ENCODE measurements at regions of chr2 and their contacts with region 1.

Region 1: GRCh38 chr2:25606892-25607291 is 66.5 kb downstream of the DTNB start:
- DNase-seq: no peak
- ATAC-seq: 0 out of 3 replicates have a peak, but pooled peaks have one; percentile 29
- H3K4me3 ChIP-seq: no peak overlapping the region
- H3K27ac ChIP-seq: no peak overlapping the region
- H3K4me1 ChIP-seq: peaks cover 8% of the 10 kb centered on the region
- H3K27me3 ChIP-seq: no peaks in the 10 kb centered on the region
- CTCF ChIP-seq: peak; percentile 44 to 74 (median 51)
- EP300 ChIP-seq: no peak
- POLR2A ChIP-seq: no peak
- RAD21 ChIP-seq: peak; percentile 83

Region 2: DNA sequence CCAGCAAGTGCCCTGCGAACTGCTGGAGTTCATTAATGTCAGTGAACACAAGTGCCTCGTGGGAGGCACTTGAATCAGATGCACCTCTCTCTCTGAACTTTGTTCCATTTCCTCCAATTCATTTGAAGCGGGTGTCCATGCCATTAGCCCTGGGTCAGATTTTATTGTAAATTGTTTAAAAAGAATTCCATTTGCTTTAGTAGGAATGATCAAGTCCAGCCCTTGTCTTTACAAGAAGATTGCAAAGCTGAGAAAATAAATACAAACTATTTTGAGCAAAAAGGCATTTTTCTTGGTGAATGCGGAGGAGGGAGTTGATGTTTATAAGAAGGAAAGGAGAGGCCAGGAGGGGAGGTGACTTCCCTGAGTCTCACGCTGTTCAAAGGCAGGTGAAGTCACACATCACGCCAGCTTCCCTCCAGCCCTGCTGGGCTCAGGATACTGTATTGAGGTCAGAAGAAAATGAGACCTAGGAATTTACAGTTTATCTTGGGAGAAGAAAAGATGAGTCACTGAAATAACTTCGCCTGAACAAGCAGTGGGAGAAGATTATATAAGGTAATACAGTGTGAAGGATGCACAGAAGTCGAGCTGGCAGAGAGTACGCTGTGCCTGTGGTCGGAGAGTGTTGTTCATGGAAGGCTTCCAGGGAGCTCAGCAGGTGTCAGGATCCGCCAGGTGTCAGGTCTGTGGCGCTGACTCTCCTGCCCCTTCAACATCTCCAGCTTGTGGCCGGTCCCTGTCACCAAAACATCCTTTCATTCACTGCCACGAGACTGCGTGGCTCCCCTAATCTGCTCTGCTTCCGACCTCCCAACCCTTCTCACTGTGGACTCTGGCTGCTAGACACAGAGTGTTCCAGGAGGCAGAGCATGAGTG is 528.5 kb before region 1 on chr2:
- CTCF ChIA-PET with region 1: no interaction called
- POLR2A ChIA-PET with region 1: no interaction called
- RAD21 ChIA-PET with region 1: no interaction called
- SMC1A ChIA-PET with region 1: no interaction called
- in situ Hi-C with region 1: no loop called
- intact Hi-C with region 1: no loop called
- DNase-seq: no peak
- ATAC-seq: no peak
- H3K4me3 ChIP-seq: no peak overlapping the region
- H3K27ac ChIP-seq: no peak overlapping the region
- H3K4me1 ChIP-seq: peaks cover 8% of the 10 kb centered on the region
- H3K27me3 ChIP-seq: 0 out of 4 replicates have a peak, but pooled peaks cover 0 to 2% of the 10 kb centered on the region in 2 experiments
- CTCF ChIP-seq: no peak
- EP300 ChIP-seq: no peak
- POLR2A ChIP-seq: no peak
- RAD21 ChIP-seq: no peak

Region 3: DNA sequence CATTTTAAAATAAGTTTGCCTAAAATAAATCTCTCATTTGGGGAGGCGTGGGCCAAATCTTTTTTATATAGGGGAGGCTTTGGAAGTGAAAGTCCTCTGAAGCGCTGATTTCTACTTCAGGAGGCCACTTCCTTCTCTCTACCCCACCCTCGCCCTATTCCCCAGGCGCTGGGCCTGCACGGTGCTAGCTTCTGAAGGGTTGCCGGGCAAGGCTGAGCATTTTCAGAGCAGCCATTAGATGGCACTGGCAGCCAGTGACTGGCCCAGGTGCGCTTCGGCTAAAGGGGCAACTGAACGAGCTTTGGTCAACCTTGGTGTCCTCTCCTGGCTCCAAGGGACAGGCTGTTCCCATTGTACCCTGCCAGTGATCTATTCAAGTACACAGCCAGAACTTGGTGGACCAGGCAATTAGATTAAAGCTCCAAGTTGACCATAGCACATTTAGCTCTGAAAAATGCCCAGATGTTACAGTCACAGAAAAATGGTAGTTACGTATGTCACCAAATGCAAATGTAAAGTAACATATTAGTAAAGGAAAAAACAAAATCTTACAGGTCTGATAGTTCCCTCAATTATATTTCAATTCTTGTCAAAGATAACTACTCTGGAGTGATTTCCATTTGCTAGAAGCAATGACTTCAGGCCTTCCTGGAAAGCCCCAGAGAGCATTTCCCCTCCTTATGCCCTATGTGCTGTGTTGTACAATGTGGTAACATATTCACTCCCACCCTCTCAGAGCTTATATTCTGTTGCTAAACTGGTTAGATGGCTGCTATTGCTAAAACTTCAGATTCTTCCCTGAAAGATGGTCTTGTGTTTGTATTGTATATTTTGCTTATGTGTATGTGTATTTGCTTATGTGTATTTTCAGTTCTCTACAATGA is 440.7 kb before region 1 on chr2:
- CTCF ChIA-PET with region 1: interaction called, 29 read pairs
- POLR2A ChIA-PET with region 1: no interaction called
- RAD21 ChIA-PET with region 1: interaction called, 8 read pairs
- SMC1A ChIA-PET with region 1: interaction called, 3 read pairs
- in situ Hi-C with region 1: no loop called
- intact Hi-C with region 1: no loop called
- DNase-seq: peak; percentile 49
- ATAC-seq: peak; percentile 97
- H3K4me3 ChIP-seq: no peak overlapping the region
- H3K27ac ChIP-seq: no peak overlapping the region
- H3K4me1 ChIP-seq: peaks cover 18% of the 10 kb centered on the region
- H3K27me3 ChIP-seq: peaks cover 5 to 14% of the 10 kb centered on the region in 2 experiments; a peak in 3 of 4 replicates
- CTCF ChIP-seq: peak; percentile 74 to 97 (median 79)
- EP300 ChIP-seq: no peak
- POLR2A ChIP-seq: no peak
- RAD21 ChIP-seq: peak; percentile 82

Region 4: DNA sequence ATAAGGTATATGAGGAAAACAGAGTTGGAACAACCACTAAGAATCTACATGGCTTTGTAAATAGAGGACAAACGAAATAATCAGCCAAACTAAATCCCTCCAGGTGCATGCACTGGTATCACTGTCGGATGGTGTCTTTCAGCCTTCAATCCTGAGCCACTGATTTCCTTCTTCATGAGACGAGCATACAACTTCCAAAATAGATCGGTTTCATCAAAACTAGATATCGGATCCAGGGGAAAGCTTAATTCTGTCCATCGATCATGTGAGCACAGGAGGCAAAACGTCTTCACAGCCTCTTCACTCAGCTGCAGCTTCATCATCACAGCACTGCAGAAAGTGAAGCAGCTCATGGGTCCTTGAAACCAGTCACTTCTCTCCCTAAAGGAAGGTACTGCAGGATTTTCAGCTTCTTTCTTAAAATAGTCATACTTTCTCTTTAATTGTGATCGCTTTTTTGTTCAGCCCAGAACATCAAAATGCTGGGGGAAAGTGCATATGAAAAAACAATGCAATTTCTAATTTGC is 14.1 kb before region 1 on chr2:
- CTCF ChIA-PET with region 1: interaction called, 40 read pairs
- POLR2A ChIA-PET with region 1: interaction called, 4 read pairs
- RAD21 ChIA-PET with region 1: interaction called, 20 read pairs
- SMC1A ChIA-PET with region 1: interaction called, 19 read pairs
- in situ Hi-C with region 1: no loop called
- intact Hi-C with region 1: no loop called
- DNase-seq: no peak
- ATAC-seq: no peak; the same call in 2 of the 3 replicates
- H3K4me3 ChIP-seq: no peak overlapping the region
- H3K27ac ChIP-seq: no peak overlapping the region
- H3K4me1 ChIP-seq: peaks cover 19% of the 10 kb centered on the region
- H3K27me3 ChIP-seq: no peaks in the 10 kb centered on the region
- CTCF ChIP-seq: no peak
- EP300 ChIP-seq: no peak
- POLR2A ChIP-seq: no peak
- RAD21 ChIP-seq: no peak

Region 5: DNA sequence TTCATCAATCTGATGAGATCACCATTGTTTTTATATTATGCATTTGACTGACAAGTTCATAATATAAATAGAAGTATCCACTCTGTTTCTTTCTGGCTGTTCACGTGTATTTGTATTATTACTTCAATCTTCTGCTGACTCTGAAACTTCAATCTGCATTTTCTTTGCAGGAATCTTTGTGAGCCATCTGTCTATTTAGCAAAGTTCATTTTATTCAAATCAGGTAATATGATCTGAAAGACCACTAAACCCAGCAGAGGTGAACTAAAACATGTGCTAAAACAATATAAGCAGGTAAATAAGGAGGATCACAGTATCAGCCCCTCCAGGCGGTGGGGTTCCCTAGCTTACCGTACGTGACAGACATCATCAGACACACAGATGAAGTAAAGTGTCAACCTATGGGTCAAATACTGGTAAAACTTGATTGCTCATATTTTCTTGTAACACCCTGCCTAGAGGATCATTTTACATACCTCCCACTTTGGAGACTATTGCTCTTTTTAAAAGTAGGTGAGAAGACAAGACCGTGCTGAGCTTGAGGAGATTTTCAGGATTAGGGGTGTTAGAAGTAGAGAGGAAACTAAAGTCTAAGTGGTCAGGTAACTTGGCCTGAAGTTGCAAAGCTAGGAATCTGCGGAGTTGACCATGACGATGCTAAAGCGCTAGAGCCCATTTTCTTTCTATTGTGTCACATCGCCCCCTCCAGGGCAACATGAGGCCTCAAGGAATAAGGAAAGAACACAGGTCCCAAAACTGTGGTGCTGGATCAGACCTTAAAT is 57.5 kb after region 1 on chr2:
- CTCF ChIA-PET with region 1: interaction called, 136 read pairs
- POLR2A ChIA-PET with region 1: interaction called, 4 read pairs
- RAD21 ChIA-PET with region 1: interaction called, 59 read pairs
- SMC1A ChIA-PET with region 1: interaction called, 72 read pairs
- in situ Hi-C with region 1: no loop called
- intact Hi-C with region 1: loop called (anchors 2 kb)
- DNase-seq: no peak
- ATAC-seq: peak; percentile 74
- H3K4me3 ChIP-seq: no peak overlapping the region
- H3K27ac ChIP-seq: no peak overlapping the region
- H3K4me1 ChIP-seq: no peaks in the 10 kb centered on the region
- H3K27me3 ChIP-seq: no peaks in the 10 kb centered on the region
- CTCF ChIP-seq: peak; percentile 63 to 72 (median 67)
- EP300 ChIP-seq: no peak
- POLR2A ChIP-seq: no peak
- RAD21 ChIP-seq: peak; percentile 95

Region 6: DNA sequence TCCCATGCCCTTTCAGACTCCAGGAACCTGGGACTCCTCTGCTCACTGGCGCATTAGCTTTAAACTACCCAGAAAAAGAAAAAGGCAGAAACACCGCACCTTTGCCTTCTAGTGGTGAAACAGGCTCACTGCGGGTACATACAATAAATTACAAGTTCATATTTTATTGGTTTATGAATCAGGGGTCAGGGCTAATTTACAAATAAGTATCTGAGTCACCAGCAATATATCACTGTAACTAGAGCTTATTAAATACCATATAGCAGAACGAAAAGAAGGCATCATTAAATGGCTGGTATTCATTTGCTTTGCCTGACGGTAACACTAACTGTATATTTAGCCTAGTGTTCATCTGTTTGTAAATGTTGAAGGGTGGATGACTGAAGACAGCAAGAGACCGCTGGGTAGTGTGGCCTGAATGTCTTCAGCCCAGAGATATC is 93.3 kb after region 1 on chr2:
- CTCF ChIA-PET with region 1: interaction called, 162 read pairs
- POLR2A ChIA-PET with region 1: interaction called, 3 read pairs
- RAD21 ChIA-PET with region 1: interaction called, 50 read pairs
- SMC1A ChIA-PET with region 1: interaction called, 72 read pairs
- in situ Hi-C with region 1: no loop called
- intact Hi-C with region 1: loop called (anchors 1 kb)
- DNase-seq: no peak
- ATAC-seq: peak; percentile 86
- H3K4me3 ChIP-seq: no peak overlapping the region
- H3K27ac ChIP-seq: no peak overlapping the region
- H3K4me1 ChIP-seq: no peaks in the 10 kb centered on the region
- H3K27me3 ChIP-seq: peaks cover 4 to 5% of the 10 kb centered on the region in 2 experiments; a peak in 2 of 4 replicates
- CTCF ChIP-seq: peak; percentile 69 to 80 (median 70)
- EP300 ChIP-seq: no peak
- POLR2A ChIP-seq: no peak
- RAD21 ChIP-seq: peak; percentile 65

Region 7: DNA sequence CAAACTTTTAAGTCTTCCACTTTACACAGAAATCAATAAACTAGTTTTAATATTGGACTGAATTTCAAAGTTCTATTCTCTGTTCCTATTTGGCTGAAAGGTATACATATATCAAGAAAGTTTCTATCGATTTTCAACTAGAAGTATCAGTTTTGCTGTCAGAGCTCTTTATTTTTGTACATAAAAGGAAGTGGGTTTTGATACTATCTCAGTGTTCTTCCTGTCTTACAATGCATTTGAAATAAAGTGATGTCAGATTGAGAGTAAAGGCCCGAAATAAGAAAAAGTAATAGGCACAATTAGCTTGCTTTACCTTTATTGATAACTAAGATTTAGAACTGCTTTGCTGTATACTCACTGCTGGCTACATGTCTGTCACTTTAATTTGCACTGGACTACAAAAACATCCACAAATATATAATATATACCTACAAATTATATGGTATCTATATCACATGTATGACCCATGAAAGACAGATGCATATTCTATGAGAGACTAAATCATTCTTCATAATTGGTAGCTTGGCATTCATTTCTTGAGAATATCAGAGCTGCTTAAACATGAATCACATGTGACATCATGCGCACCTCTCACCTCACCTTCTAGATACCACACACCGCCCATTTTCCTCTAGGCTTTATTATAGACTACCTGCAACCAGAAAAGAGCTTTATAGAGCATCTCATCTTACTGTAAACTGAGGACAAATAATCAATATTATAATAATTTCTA is 187.8 kb after region 1 on chr2:
- CTCF ChIA-PET with region 1: interaction called, 4 read pairs
- POLR2A ChIA-PET with region 1: no interaction called
- RAD21 ChIA-PET with region 1: interaction called, 5 read pairs
- SMC1A ChIA-PET with region 1: no interaction called
- in situ Hi-C with region 1: no loop called
- intact Hi-C with region 1: loop called (anchors 10 kb)
- DNase-seq: peak; percentile 16
- ATAC-seq: peak; percentile 81
- H3K4me3 ChIP-seq: peak overlapping the region; percentile 25; the same call in 1 of the 2 replicates
- H3K27ac ChIP-seq: peak overlapping the region; percentile 13; the same call in 1 of the 2 replicates
- H3K4me1 ChIP-seq: peaks cover 5% of the 10 kb centered on the region; the same call in 1 of the 2 replicates
- H3K27me3 ChIP-seq: no peaks in the 10 kb centered on the region
- CTCF ChIP-seq: no peak
- EP300 ChIP-seq: no peak
- POLR2A ChIP-seq: no peak
- RAD21 ChIP-seq: no peak

Measured in GM12878 (cell line).